Natural killer cell (primary cell): ENCODE measurements at regions of chr2 and their contacts with region 1.

Region 1: DNA sequence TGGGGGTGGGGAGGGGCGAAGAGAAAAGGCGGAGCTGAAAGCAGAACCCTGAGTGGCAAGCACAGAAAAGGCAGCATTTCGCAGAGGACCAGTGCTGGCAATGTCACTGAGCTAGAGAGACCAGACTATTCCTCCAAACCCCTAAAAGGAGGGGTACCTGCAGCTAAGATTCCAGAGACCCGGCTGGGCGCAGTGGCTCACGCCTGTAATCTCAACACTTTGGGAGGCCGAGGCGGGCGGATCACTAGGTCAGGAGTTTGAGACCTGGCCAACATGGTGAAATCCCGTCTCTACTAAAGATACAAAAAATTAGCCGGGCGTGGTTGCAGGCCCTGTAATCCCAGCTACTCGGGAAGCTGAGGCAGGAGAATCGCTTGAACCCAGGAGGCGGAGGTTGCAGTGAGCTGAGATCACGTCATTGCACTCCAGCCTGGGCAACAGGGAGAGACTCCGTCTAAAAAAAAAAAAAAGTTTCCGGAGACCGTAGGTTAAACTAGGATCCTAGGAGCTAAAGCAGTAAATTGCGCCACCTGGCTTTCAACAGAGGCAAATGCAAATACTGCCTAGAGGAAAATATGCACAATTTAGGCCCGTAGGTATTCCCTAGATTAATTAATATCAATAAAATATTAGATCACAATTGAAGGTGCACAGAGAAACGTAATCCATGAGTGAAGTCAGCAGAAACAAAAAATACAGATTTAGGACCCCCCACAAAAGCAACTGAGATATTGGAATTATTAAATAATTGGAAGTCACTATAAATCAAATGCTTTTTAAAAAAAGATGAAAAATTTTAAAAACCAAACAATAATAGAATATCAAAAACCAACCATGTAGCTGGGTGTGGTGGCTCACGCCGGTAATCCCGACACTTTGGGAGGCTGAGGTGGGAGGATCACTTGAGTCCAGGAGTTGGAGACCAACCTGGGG is 4.9 kb downstream of the UCN start:
- DNase-seq: peak in 1 of 2 donors; percentile 77
- ATAC-seq: peak in 2 of 3 donors; percentile 75 to 78
- H3K4me3 ChIP-seq: peak overlapping the region; percentile 13
- H3K4me3 Mint-ChIP-seq: peak overlapping the region; percentile 66
- H3K27ac ChIP-seq: no peak overlapping the region
- H3K27ac Mint-ChIP-seq: peak overlapping the region in 1 of 2 donors; percentile 45
- H3K4me1 ChIP-seq: peaks cover 20% of the 10 kb centered on the region
- H3K4me1 Mint-ChIP-seq: peaks cover 0 to 12% of the 10 kb centered on the region in 2 donors
- H3K27me3 ChIP-seq: peaks cover 11% of the 10 kb centered on the region
- H3K27me3 Mint-ChIP-seq: peaks cover 5 to 6% of the 10 kb centered on the region in 2 donors
- CTCF ChIP-seq: peak; percentile 91

Region 2: DNA sequence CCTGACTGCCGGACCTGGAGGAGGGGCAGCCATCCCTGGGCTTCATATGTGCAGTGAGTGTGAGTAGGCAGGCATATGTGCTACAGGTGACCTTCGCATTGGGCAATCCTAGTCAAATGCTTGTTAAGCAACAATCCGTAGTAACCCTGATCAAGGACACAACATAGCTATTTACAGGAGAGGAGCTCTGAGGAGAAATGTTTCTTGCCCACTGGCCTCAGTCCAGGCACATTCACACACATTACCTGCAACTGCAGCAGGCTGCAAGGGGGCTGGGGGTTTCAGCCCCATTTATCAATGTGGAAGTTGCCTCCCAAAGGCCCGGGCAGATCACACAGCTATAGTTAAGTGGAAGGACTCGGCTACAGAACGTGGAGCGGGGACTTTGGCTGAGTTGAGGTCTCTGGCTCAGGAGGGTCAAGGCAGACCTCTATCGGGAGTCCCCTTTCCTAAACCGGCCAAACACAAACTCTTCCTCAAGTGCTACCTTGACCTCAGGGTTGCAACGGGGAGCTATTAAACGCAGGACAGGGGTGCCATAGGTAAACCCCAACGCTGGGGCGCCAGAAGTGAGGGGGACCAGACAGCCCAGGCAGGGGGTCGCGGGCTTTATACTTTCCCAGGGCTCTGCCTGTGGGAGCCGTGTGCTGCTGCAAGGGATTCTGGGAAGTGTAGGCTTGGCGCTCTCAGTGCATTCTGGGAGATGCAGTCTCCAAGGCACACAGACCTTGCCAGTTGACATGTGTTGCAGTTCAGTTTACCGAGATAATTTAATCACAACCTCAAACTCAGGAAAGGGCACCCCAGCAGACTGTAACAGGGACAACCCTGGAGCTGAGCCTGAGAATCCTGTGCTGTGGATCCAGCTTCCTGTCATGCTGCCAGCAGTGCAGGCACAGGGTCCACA is 207.4 kb before region 1 on chr2:
- intact Hi-C with region 1: loop called (anchors 1 kb)
- DNase-seq: peak in 1 of 2 donors; percentile 69
- ATAC-seq: peak; percentile 63 to 94 (median 88)
- H3K4me3 ChIP-seq: no peak overlapping the region
- H3K4me3 Mint-ChIP-seq: peak overlapping the region; percentile 61
- H3K27ac ChIP-seq: no peak overlapping the region
- H3K27ac Mint-ChIP-seq: no peak overlapping the region
- H3K4me1 ChIP-seq: peaks cover 9% of the 10 kb centered on the region
- H3K4me1 Mint-ChIP-seq: peaks cover 0 to 16% of the 10 kb centered on the region in 2 donors
- H3K27me3 ChIP-seq: no peaks in the 10 kb centered on the region
- H3K27me3 Mint-ChIP-seq: no peaks in the 10 kb centered on the region
- CTCF ChIP-seq: no peak

Region 3: GRCh38 chr2:27152786-27153510 is 150.4 kb before region 1 on chr2:
- intact Hi-C with region 1: no loop called
- DNase-seq: no peak
- ATAC-seq: no peak
- H3K4me3 ChIP-seq: no peak overlapping the region
- H3K4me3 Mint-ChIP-seq: no peak overlapping the region
- H3K27ac ChIP-seq: no peak overlapping the region
- H3K27ac Mint-ChIP-seq: no peak overlapping the region
- H3K4me1 ChIP-seq: no peaks in the 10 kb centered on the region
- H3K4me1 Mint-ChIP-seq: no peaks in the 10 kb centered on the region
- H3K27me3 ChIP-seq: no peaks in the 10 kb centered on the region
- H3K27me3 Mint-ChIP-seq: peaks cover 0 to 3% of the 10 kb centered on the region in 2 donors
- CTCF ChIP-seq: no peak